HEK293T (cell line): ENCODE measurements at regions of chrX and their contacts with region 1.

Region 1: GRCh38 chrX:119729408-119730201 is 28.8 kb upstream of the SOWAHD start:
- DNase-seq: peak; percentile 70

Region 2: DNA sequence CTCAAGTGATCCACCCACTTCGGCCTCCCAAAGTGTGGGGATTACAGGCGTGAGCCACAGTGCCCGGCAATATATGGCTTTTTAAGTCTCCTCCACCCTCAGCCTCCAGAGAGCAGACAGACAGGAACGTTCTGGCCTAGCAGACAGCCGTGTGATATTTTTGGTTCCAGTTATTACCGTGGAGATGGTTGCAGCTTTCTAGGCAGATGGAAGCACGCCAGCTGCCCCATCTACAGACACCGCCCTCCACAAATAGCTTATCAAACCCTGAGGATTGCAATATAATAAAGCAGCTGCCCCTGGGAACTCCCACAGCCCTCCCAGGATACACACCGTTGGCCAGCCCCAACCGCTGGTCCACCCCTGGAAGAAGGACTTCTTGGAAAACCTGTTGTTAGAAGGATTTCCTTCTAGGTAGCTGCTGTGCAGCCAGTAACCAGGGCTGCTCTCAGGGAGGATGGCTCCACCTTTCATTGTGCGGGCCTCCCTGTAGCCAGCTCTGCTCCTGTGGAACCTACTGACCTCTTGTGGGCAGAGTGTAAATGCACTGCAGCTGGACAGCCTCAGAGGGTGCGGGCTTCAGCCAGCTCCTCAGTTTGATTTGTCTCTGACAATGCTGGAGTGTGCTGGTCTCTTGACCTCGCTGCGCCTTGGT is 217.3 kb before region 1 on chrX:
- CTCF ChIA-PET with region 1: interaction called, 10 read pairs
- POLR2A ChIA-PET with region 1: no interaction called
- DNase-seq: peak; percentile 89

Region 3: GRCh38 chrX:119606280-119607015 is 123.2 kb before region 1 on chrX and contains the start of gene NKRF:
- CTCF ChIA-PET with region 1: interaction called, 17 read pairs
- POLR2A ChIA-PET with region 1: interaction called, 3 read pairs
- DNase-seq: peak; percentile 91

Region 4: DNA sequence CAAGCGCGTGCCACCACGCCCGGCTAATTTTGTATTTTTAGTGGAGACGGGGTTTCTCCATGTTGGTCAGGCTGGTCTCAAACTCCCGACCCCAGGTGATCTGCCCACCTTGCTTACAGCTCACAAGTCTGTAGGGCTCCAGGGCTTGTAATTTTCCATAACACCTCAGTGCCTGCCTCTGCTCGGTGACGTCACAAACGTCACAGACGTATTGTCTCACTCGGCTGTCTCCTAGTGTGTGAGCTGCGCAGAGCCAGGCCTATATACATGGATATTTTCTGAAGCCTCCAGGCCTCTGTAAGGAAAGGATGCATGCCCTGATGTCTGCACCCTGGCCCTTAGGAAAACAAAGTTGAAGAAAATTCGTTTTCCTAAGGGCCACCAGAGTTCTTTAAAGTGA is 114.8 kb before region 1 on chrX:
- CTCF ChIA-PET with region 1: interaction called, 17 read pairs
- POLR2A ChIA-PET with region 1: interaction called, 3 read pairs
- DNase-seq: no peak

Region 5: DNA sequence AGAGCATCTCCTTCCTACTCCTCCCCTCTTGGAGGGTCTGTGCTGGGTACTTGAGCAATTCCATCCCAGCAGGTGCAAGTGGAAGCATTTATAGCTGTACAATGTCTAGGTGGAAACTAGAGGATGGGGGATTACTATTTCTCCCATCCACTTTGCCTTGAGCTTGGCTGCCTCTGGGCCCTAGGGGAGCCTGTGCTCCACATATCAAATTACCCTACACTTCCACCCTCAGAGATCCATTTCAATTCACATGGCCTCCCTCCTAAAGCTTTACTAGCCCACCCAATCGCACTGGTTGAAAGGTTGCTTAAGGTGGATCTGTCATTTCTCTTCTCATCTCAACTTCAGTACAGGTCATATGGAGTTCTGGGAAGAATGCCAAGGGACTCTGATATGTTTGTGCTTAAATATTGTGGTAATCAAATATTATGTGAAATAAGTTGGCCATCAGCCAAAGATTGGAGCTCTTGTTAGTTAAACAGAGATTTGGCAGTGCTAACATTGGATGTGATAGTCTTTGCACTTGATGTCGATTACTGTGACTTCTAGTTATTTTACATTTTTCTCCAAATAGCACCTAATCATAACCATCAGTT is 57.3 kb before region 1 on chrX:
- CTCF ChIA-PET with region 1: interaction called, 15 read pairs
- POLR2A ChIA-PET with region 1: no interaction called
- DNase-seq: no peak

Region 6: GRCh38 chrX:119745283-119745848 is 15.8 kb after region 1 on chrX:
- CTCF ChIA-PET with region 1: interaction called, 15 read pairs
- POLR2A ChIA-PET with region 1: interaction called, 3 read pairs
- DNase-seq: no peak